CD4-positive, alpha-beta memory T cell (primary cell): ENCODE measurements at regions of chr1 and their contacts with region 1.

Region 1: DNA sequence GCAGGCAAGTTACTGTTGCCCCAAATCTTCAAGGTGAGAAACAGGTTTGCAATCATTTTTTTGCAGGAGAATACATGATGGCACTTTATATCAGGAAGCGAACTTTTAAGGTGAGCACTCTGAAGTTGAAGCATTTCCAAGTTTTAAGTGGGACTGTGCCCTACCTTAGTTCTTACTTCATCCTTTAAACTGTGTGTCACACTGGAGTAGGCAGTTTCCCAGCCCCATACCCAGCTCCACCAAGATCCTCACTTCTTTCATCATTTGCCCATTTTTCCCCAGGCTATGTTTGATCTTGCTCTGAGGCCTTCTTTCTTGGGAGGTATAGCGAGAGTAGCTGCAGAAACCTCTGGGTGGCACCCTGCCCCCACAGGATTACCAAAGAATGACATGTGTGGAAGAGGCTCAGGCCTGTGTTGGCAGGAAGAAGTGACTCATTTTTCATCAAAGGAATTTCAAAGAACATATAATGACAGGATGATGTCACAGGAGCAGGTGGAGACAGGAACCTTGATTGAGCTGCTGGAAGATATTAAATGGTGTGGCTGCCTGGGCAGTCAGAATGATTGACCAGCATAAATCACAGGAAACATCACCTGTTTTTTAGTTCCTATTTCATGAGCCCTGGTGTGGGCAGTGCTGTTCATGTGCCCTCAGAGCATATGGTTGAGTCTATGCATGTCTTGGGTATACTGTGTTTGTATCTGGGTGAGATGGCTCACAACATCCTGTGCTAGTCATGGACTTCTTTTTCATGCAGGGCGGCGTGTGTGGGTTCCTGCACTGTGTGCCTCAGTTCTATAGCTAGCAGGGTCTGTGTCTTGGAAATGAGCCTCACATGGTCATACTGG is 20.8 kb upstream of the MACF1 start:
- DNase-seq: peak; percentile 83 to 95 (median 87)
- H3K4me3 ChIP-seq: no peak overlapping the region
- H3K4me3 Mint-ChIP-seq: peak overlapping the region in 5 of 8 donors; percentile 8 to 53 (median 35)
- H3K27ac ChIP-seq: peak overlapping the region; percentile 70
- H3K27ac Mint-ChIP-seq: peak overlapping the region; percentile 90 to 98 (median 96)
- H3K4me1 ChIP-seq: peaks cover 34% of the 10 kb centered on the region
- H3K4me1 Mint-ChIP-seq: peaks cover 18 to 44% (median 30%) of the 10 kb centered on the region in 4 donors
- H3K27me3 ChIP-seq: no peaks in the 10 kb centered on the region
- H3K27me3 Mint-ChIP-seq: no peaks in the 10 kb centered on the region

Region 2: GRCh38 chr1:39160703-39161102 is 23.0 kb before region 1 on chr1:
- CTCF ChIA-PET with region 1: no interaction called
- POLR2A ChIA-PET with region 1: no interaction called
- intact Hi-C with region 1: no loop called
- DNase-seq: no peak
- H3K4me3 ChIP-seq: no peak overlapping the region
- H3K4me3 Mint-ChIP-seq: no peak overlapping the region
- H3K27ac ChIP-seq: no peak overlapping the region
- H3K27ac Mint-ChIP-seq: no peak overlapping the region
- H3K4me1 ChIP-seq: no peaks in the 10 kb centered on the region
- H3K4me1 Mint-ChIP-seq: no peaks in the 10 kb centered on the region
- H3K27me3 ChIP-seq: no peaks in the 10 kb centered on the region
- H3K27me3 Mint-ChIP-seq: peaks cover 4% of the 10 kb centered on the region in 2 donors

Region 3: DNA sequence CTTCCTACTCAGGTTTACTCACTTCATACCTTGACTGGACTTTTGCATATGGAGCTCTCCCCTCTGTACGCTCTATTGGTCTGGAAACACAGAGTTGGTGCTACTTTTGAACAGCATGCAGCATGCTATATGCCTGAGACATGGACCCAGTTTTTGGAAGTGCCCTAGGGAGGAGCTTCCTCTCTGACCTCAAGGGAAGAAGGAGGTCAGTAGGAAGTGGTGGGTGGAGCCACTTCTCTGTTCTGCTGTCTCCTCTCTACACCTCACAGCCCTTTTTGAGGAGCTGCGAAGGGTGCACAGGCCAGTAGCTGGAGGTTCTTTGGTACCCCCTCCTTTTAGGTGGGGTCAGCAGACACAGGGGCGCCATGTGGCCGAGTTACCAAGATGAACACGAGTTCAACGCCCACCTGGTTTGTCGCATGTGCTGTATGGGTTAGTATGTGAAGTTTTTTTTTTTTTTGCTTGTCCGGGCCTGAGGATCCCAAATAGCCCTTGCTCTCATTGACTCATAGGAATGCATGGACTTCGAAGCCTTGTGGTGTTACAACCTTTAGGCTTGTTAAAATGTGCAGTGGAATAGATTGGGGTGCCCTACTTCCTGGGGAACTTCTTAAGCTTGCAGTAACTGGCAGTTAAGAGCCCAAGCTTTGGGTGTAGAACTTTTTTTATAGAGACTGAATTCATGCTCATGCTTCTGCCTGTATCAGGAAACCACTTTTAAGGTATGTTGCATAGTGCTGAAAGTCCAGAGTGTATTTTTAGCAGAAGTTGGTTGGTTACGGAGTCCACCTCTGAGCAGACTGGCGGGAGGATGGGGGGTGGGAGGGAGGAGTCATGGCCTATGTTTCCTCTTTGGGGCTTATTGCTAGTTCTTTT is 31.5 kb after region 1 on chr1:
- CTCF ChIA-PET with region 1: interaction called, 186 read pairs
- POLR2A ChIA-PET with region 1: interaction called, 19 read pairs
- intact Hi-C with region 1: no loop called
- DNase-seq: peak; percentile 34 to 70 (median 42)
- H3K4me3 ChIP-seq: peak overlapping the region; percentile 65 to 69
- H3K4me3 Mint-ChIP-seq: peak overlapping the region; percentile 92 to 99 (median 94)
- H3K27ac ChIP-seq: peak overlapping the region; percentile 75
- H3K27ac Mint-ChIP-seq: peak overlapping the region; percentile 89 to 96 (median 92)
- H3K4me1 ChIP-seq: peaks cover 58% of the 10 kb centered on the region
- H3K4me1 Mint-ChIP-seq: peaks cover 34 to 71% (median 48%) of the 10 kb centered on the region in 4 donors
- H3K27me3 ChIP-seq: no peaks in the 10 kb centered on the region
- H3K27me3 Mint-ChIP-seq: no peaks in the 10 kb centered on the region

Region 4: GRCh38 chr1:39632682-39633417 is 449.1 kb after region 1 on chr1:
- CTCF ChIA-PET with region 1: no interaction called
- POLR2A ChIA-PET with region 1: no interaction called
- intact Hi-C with region 1: no loop called
- DNase-seq: no peak
- H3K4me3 ChIP-seq: no peak overlapping the region
- H3K4me3 Mint-ChIP-seq: no peak overlapping the region
- H3K27ac ChIP-seq: no peak overlapping the region
- H3K27ac Mint-ChIP-seq: no peak overlapping the region
- H3K4me1 ChIP-seq: no peaks in the 10 kb centered on the region
- H3K4me1 Mint-ChIP-seq: no peaks in the 10 kb centered on the region
- H3K27me3 ChIP-seq: no peaks in the 10 kb centered on the region
- H3K27me3 Mint-ChIP-seq: peaks cover 11 to 28% of the 10 kb centered on the region in 2 donors